ENCODE measurements at regions of chr9 and their contacts with region 1.

Region 1: DNA sequence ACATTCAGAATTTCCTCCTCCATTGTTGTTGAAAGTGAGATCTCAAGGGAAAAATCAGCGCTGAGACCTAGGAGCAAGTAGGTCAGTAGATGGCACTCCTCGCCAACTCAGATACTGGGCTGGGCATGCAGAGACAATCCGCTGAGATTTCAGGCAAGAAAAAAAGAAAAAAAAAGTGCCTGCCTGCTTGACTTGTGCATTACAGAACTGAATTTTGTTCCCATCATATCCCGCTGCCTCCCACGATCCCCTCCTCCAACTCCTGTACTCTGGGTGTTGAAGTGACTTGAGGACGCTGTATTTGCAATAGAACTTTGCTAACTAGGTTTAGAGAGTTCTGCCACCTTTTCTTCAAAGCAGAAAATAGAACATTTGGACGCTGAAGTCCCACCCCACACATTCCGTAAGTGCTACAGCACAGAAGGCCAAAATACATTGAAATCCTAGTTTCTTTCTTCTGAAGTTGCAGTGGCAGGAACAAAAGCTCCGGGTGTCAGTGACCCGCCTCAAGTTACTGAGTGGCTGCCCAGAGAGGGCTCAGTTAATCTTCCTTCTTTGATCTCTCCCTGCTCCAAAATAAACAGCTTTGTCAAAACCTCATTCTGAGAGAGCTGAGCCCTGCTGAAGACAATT is 265.8 kb downstream of the MLLT3 start:
- DNase-seq: no peak
- H3K4me3 ChIP-seq: peak overlapping the region; percentile 28 to 36 (median 36)
- H3K27ac ChIP-seq: peak overlapping the region; percentile 58 to 72 (median 66)
- H3K4me1 ChIP-seq: peaks cover 18 to 37% (median 29%) of the 10 kb centered on the region in 4 donors
- H3K27me3 ChIP-seq: no peaks in the 10 kb centered on the region
- CTCF ChIP-seq: peak; percentile 69 to 72 (median 70)
- EP300 ChIP-seq: no peak
- POLR2A ChIP-seq: no peak

Region 2: GRCh38 chr9:19925817-19926503 is 430.6 kb before region 1 on chr9:
- intact Hi-C with region 1: loop called (anchors 10 kb)
- DNase-seq: peak; percentile 94
- H3K4me3 ChIP-seq: peak overlapping the region; percentile 43 to 61 (median 45)
- H3K27ac ChIP-seq: no peak overlapping the region
- H3K4me1 ChIP-seq: peaks cover 0 to 10% (median 7%) of the 10 kb centered on the region in 4 donors
- H3K27me3 ChIP-seq: no peaks in the 10 kb centered on the region
- CTCF ChIP-seq: peak; percentile 93 to 96 (median 94)
- EP300 ChIP-seq: no peak
- POLR2A ChIP-seq: no peak

Region 3: GRCh38 chr9:20684035-20684872 is 327.7 kb after region 1 on chr9 and contains the start of gene FOCAD:
- intact Hi-C with region 1: loop called (anchors 5 kb)
- DNase-seq: peak; percentile 98
- H3K4me3 ChIP-seq: peak within 1 kb of the TSS; percentile 77 to 94 (median 92)
- H3K27ac ChIP-seq: peak within 1 kb of the TSS; percentile 92 to 97 (median 96)
- H3K4me1 ChIP-seq: peaks cover 14 to 36% (median 28%) of the 10 kb centered on the region in 4 donors
- H3K27me3 ChIP-seq: no peaks in the 10 kb centered on the region
- CTCF ChIP-seq: peak in 1 of 3 experiments; percentile 8
- EP300 ChIP-seq: no peak
- POLR2A ChIP-seq: peak; percentile 88
- total RNA-seq, gene FOCAD: 17.6 to 27.2 (median 20.1) TPM

Region 4: DNA sequence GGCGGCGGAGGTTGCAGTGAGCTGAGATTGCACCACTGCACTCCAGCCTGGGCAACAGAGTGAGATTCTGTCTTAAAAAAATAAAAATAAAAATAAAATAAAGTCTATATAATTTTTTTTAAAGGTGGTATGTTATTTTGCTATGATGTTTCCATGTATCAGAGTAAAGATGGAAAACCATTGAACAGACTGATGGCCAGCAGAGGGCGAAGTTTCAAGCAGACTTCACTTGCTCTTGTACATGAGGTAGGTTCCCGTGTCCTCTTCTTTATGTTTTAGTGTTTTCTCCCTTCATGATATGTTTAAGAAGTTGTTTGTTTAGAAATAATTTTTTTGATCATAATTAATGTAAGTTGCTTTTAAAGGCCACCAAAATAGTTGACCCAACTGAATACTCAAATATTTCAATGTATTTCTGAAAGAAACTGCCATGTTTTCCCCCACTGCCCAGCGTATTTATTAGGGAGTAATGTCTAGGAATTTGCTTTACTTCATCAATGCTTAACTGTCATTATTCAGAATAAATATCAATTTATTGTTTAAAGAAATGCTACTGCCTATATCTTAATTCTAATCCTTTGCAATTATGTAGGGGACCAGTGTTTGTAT is 528.6 kb after region 1 on chr9:
- intact Hi-C with region 1: loop called (anchors 10 kb)
- DNase-seq: no peak
- H3K4me3 ChIP-seq: no peak overlapping the region
- H3K27ac ChIP-seq: no peak overlapping the region
- H3K4me1 ChIP-seq: no peaks in the 10 kb centered on the region
- H3K27me3 ChIP-seq: no peaks in the 10 kb centered on the region
- CTCF ChIP-seq: peak; percentile 53 to 75 (median 72)
- EP300 ChIP-seq: no peak
- POLR2A ChIP-seq: no peak

Region 5: GRCh38 chr9:20941174-20941690 is 584.7 kb after region 1 on chr9:
- intact Hi-C with region 1: loop called (anchors 5 kb)
- DNase-seq: no peak
- H3K4me3 ChIP-seq: no peak overlapping the region
- H3K27ac ChIP-seq: no peak overlapping the region
- H3K4me1 ChIP-seq: peaks cover 0 to 12% (median 10%) of the 10 kb centered on the region in 4 donors
- H3K27me3 ChIP-seq: no peaks in the 10 kb centered on the region
- CTCF ChIP-seq: peak; percentile 76 to 82 (median 78)
- EP300 ChIP-seq: no peak
- POLR2A ChIP-seq: no peak

Region 6: DNA sequence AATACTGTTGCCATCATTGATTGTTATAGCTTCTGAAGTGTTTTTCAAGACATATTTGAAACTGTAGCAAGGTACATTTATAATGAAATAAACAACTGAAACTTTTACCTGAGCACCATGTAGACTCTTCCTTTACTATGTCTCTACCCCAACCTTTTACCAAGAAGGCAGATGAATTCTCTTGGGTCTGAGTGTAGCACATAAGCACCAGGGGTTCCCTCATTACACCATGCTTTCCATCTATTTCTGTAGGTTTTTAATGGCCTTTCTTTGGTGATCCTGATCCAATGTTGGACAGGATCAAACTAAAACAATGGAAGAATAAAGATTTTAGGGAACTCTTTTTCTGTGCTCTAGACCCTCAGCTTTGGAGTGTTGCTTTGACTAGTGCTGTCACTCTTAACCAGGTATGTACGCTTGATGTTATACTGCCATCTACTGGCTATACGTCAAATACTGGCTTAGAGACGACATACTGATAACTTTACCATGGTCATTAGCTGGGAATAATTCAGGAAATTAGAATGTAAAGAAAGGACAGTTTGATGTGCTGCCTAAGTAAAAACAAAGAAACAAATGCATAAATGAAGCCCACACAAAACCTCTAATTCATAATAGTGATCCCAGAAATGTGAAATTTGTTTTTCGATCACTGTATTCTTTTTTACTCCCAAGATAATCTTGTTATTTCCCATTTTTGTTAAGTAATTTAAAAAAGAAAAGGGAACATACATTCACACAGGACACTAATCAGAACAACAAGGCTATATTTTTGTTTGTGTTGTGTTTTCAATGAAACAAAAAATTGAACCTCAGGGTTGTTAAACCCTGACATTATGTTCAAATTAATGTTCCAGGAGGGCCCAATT is 754.4 kb after region 1 on chr9:
- intact Hi-C with region 1: loop called (anchors 10 kb)
- DNase-seq: no peak
- H3K4me3 ChIP-seq: no peak overlapping the region
- H3K27ac ChIP-seq: no peak overlapping the region
- H3K4me1 ChIP-seq: peaks cover 0 to 8% (median 3%) of the 10 kb centered on the region in 4 donors
- H3K27me3 ChIP-seq: no peaks in the 10 kb centered on the region
- CTCF ChIP-seq: peak; percentile 77 to 87 (median 81)
- EP300 ChIP-seq: no peak
- POLR2A ChIP-seq: no peak